Activated T-helper 1 cell treated with anti-CD3 and anti-CD28 coated beads, Interleukin-12 subunit alpha, Interleukin-12 subunit beta, Interleukin-2, Interleukin-4 antibody, amounts not matched to agents 30 ng/mL and 10 ng/mL and 1 ng/mL, durations not matched to agents 14 hours and 24 hours and 36 hours (primary cell): ENCODE measurements at regions of chr11 and their contacts with region 1.

Region 1: DNA sequence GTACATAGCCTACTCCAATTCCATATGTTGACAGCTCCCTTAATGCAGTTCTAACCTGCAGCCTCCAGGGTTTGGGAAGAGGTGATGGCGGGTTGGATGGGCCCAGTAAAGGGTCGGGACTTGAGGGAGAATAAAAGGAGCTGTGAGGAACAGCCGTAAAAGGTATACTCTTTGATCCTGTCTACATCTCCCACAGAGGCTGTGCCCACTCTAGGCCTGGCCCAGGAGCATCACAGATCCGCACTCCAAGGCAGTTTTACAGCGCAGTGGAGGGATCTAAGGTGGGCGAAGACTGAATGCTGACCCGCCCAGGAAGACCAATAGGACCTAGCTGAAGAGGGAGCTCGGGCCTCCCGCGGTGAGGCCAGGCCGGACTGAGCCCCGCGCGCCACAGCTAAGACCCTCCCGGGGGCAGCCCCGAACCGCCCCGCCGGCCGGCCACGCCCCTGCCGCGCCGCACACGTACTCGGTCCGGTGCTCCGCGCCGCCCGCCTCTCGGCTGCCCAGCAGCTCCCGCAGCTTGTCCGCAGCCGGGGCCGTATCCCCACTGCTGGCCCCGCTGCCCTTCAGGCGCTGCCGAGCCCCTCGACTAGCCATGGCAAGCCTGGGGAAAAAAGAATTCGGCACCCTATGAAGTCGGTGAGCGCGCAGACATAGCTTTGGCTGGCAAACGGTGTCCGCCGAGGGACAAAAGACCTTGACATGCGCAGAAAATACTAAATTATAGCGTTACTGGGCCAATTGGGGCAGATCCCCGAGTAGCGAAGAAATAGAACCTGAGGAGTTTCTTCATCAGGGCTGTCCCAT is at the start of gene ALG9:
- DNase-seq: peak; percentile 85
- H3K4me3 Mint-ChIP-seq: peak within 1 kb of the TSS; percentile 89
- H3K27ac Mint-ChIP-seq: peak within 1 kb of the TSS; percentile 90
- H3K4me1 Mint-ChIP-seq: peaks cover 32% of the 10 kb centered on the region
- H3K27me3 Mint-ChIP-seq: no peaks in the 10 kb centered on the region
- total RNA-seq, gene ALG9: 29.3 and 31.8 TPM in 2 replicates

Region 2: DNA sequence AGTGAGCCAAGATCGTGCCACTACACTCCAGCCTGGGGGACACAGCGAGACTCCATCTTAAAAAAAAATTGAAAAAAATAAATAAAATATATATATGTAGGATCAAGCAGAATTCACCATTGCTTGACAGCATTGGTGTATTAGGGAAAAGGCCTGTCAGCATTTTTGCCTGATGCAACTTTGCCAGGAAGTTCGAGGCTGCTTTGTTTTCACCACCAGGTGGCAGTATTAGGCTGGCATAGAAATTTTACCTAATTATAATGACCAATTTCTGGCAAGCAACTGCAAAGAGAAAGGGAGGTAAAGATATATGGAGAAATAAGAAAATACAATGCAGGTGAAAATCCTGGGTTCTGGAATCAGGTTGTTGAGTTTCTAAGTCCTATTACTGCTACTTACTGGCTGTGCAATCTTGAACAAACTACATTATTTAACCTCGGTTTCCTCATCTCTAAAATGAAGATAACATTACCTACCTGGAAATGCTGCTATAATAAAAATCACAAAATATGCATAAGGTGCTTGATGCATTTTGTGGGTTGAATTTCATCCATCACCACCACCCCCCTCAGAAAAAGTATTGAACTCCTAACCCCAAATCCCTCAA is 305.9 kb before region 1 on chr11:
- intact Hi-C with region 1: no loop called
- DNase-seq: peak; percentile 28
- H3K4me3 Mint-ChIP-seq: no peak overlapping the region
- H3K27ac Mint-ChIP-seq: no peak overlapping the region
- H3K4me1 Mint-ChIP-seq: no peaks in the 10 kb centered on the region
- H3K27me3 Mint-ChIP-seq: no peaks in the 10 kb centered on the region

Region 3: GRCh38 chr11:111766093-111766833 is 104.8 kb before region 1 on chr11 and contains the start of gene PPP2R1B:
- intact Hi-C with region 1: loop called (anchors 1 kb)
- DNase-seq: peak; percentile 60
- H3K4me3 Mint-ChIP-seq: peak within 1 kb of the TSS; percentile 96
- H3K27ac Mint-ChIP-seq: peak within 1 kb of the TSS; percentile 97
- H3K4me1 Mint-ChIP-seq: peaks cover 43% of the 10 kb centered on the region
- H3K27me3 Mint-ChIP-seq: no peaks in the 10 kb centered on the region
- total RNA-seq, gene PPP2R1B: 58.1 and 61.4 TPM in 2 replicates

Region 4: DNA sequence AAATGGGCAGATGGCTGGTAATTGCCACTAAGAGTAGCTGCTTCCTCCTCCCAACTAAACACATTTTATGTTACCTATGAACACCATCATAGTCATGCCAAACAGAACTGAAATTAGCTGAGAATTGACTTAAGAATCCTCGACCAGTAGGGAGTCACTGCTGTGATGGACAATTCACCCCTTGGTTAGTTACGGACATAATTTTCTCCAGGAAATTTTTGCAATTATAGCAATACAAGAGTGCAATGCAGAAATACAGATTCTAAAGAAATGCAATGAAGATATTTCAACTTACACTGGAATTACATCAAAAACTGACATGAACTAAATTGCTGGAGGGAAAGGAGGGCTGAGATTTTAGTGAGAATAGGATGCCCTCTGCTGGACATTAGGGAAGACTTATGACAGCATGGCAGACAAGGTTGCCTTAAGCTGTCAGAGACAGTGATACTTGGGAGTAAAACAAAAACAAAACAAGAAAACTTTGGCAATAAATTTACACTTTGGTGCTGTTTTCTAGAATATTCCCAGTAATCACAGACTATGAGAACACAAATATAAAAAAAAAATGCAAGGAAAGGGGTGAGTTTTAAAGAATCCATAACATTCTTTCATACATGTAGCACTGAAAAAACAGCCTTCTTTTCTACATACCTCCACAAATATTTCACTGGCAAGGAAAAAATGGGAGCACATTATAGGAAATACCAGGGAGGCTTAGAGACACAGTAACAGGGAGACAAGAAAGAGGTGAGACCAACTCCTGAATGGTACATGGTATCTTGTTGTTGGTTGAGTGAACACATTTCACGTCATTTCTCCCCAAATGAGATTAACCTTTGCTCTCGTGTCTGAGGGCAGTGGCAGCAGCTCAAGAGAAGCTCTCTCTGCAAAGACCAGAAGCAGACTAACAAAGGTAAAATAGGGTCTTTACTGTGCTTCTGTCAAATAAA is 93.7 kb before region 1 on chr11:
- intact Hi-C with region 1: no loop called
- DNase-seq: peak; percentile 8
- H3K4me3 Mint-ChIP-seq: no peak overlapping the region
- H3K27ac Mint-ChIP-seq: no peak overlapping the region
- H3K4me1 Mint-ChIP-seq: no peaks in the 10 kb centered on the region
- H3K27me3 Mint-ChIP-seq: no peaks in the 10 kb centered on the region

Region 5: DNA sequence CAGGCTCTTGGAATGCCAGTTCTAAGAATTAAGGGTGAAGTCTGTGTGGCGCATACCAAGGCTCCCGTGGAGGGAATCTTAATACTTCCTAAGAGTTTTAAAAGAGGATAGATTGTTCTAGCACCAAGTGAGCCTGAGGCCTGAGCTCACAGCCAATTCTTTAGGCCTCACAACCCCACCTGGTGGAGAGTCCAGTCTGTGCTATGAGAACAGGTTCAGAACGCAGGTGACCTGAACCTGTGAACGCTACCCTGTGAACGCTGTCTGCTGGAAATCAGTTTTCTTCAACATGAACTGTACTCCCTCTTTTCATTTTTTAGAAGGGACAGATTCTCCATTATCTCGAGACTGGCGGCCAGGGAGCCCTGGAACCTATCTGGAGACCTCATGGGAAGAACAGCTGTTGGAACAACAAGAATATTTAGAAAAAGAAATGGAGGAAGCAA is 111.0 kb after region 1 on chr11:
- intact Hi-C with region 1: loop called (anchors 2 kb)
- DNase-seq: peak; percentile 34
- H3K4me3 Mint-ChIP-seq: no peak overlapping the region
- H3K27ac Mint-ChIP-seq: no peak overlapping the region
- H3K4me1 Mint-ChIP-seq: peaks cover 9% of the 10 kb centered on the region
- H3K27me3 Mint-ChIP-seq: peaks cover 6% of the 10 kb centered on the region

Region 6: DNA sequence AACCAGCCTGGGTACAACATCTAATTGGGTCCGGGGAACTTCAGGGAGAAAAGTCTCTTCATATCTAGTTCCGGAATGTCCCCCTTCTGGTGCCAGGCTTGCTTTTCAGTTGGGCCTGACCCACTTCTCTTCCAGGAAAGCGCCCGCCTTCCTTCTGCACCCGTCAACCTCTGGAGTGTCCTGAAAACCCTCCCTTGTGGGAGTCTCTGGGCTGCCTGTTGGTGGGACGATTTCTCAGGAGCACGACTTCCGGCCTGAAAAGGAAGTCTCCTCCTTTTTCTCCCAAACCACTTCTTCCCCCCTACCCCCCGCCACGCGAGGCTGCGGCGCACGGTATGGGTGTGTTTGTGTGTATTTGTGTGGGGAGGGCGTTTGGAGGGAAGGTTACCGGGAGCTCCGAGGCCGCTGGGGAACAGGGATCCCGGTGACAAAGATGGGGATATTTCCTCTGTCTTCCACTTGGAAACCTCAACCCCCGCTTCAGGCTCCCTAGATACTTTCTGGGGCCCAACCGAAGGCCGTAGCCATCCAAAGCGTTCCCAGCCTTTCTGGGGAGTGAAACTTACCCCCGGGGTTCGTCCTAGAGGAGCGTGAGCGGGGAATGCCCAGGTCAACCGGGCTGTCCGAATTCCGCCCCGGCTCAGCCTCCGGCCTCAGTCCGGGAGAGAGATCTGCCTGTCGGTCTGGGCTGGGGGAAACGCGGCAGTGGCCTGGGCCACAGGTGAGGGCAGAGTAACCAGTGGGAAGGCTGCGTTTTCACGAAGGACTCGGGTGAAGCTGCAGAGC is 203.1 kb after region 1 on chr11 and contains the start of gene NKAPD1:
- intact Hi-C with region 1: loop called (anchors 1 kb)
- DNase-seq: peak; percentile 77
- H3K4me3 Mint-ChIP-seq: peak within 1 kb of the TSS; percentile 94
- H3K27ac Mint-ChIP-seq: peak within 1 kb of the TSS; percentile 95
- H3K4me1 Mint-ChIP-seq: peaks cover 39% of the 10 kb centered on the region
- H3K27me3 Mint-ChIP-seq: no peaks in the 10 kb centered on the region
- total RNA-seq, gene NKAPD1: 29.1 and 33.0 TPM in 2 replicates